A549 (cell line): ENCODE measurements at regions of chr12 and their contacts with region 1.

Region 1: GRCh38 chr12:120437754-120438494 is at the start of gene COX6A1:
- DNase-seq: peak; percentile 99
- ATAC-seq: peak; percentile 97 to 98
- H3K4me3 ChIP-seq: peak within 1 kb of the TSS; percentile 79
- H3K27ac ChIP-seq: peak within 1 kb of the TSS; percentile 71 to 91
- H3K4me1 ChIP-seq: peaks cover 14% of the 10 kb centered on the region
- CTCF ChIP-seq: no peak
- EP300 ChIP-seq: no peak
- POLR2A ChIP-seq: peak; percentile 77
- RAD21 ChIP-seq: no peak
- polyA plus RNA-seq, gene COX6A1: 948 and 1,287 TPM in 2 replicates

Region 2: GRCh38 chr12:120234643-120235368 is 203.1 kb before region 1 on chr12:
- CTCF ChIA-PET with region 1: no interaction called
- POLR2A ChIA-PET with region 1: no interaction called
- DNase-seq: peak; percentile 94 to 96
- ATAC-seq: peak; percentile 58 to 64
- H3K4me3 ChIP-seq: 0 out of 3 replicates have a peak overlapping the region, but pooled peaks have one; percentile 0
- H3K27ac ChIP-seq: peak overlapping the region; percentile 93 to 100
- H3K4me1 ChIP-seq: peaks cover 98% of the 10 kb centered on the region
- CTCF ChIP-seq: peak; percentile 39; the same call in 2 of the 3 replicates
- EP300 ChIP-seq: 0 out of 5 replicates have a peak, but pooled peaks of 1 of the 2 experiments have one; percentile 16
- POLR2A ChIP-seq: no peak
- RAD21 ChIP-seq: peak; percentile 54 to 56; a peak in 4 of 5 replicates

Region 3: GRCh38 chr12:120361506-120362208 is 76.3 kb before region 1 on chr12:
- CTCF ChIA-PET with region 1: interaction called, 26 read pairs
- POLR2A ChIA-PET with region 1: no interaction called
- DNase-seq: no peak
- ATAC-seq: no peak
- H3K4me3 ChIP-seq: no peak overlapping the region
- H3K27ac ChIP-seq: no peak overlapping the region
- H3K4me1 ChIP-seq: no peaks in the 10 kb centered on the region
- CTCF ChIP-seq: no peak
- EP300 ChIP-seq: no peak
- POLR2A ChIP-seq: no peak
- RAD21 ChIP-seq: no peak

Region 4: GRCh38 chr12:120367233-120367923 is 70.5 kb before region 1 on chr12:
- CTCF ChIA-PET with region 1: interaction called, 19 read pairs
- POLR2A ChIA-PET with region 1: interaction called, 3 read pairs
- DNase-seq: peak in 1 of 2 experiments; percentile 52
- ATAC-seq: peak in 1 of 2 experiments; percentile 47; a peak in 3 of 6 replicates
- H3K4me3 ChIP-seq: no peak overlapping the region
- H3K27ac ChIP-seq: no peak overlapping the region
- H3K4me1 ChIP-seq: peaks cover 14% of the 10 kb centered on the region; the same call in 2 of the 3 replicates
- CTCF ChIP-seq: peak; percentile 39; the same call in 2 of the 3 replicates
- EP300 ChIP-seq: no peak
- POLR2A ChIP-seq: no peak
- RAD21 ChIP-seq: no peak

Region 5: GRCh38 chr12:120413901-120414695 is 23.8 kb before region 1 on chr12:
- CTCF ChIA-PET with region 1: no interaction called
- POLR2A ChIA-PET with region 1: no interaction called
- DNase-seq: no peak
- ATAC-seq: peak; percentile 49 to 56; a peak in 5 of 6 replicates
- H3K4me3 ChIP-seq: no peak overlapping the region
- H3K27ac ChIP-seq: no peak overlapping the region
- H3K4me1 ChIP-seq: no peaks in the 10 kb centered on the region
- CTCF ChIP-seq: no peak
- EP300 ChIP-seq: no peak
- POLR2A ChIP-seq: no peak
- RAD21 ChIP-seq: no peak